Heart left ventricle (tissue), 16 donors: ENCODE measurements at regions of chr9 and their contacts with region 1.

Region 1: GRCh38 chr9:8706531-8706930 is 907.0 kb upstream of the DMAC1 start:
- DNase-seq: no peak
- ATAC-seq: no peak
- H3K4me3 ChIP-seq: no peak overlapping the region
- H3K27ac ChIP-seq: no peak overlapping the region
- H3K4me1 ChIP-seq: no peaks in the 10 kb centered on the region
- H3K27me3 ChIP-seq: no peaks in the 10 kb centered on the region
- CTCF ChIP-seq: no peak
- POLR2A ChIP-seq: no peak

Region 2: GRCh38 chr9:8053530-8053929 is 653.0 kb before region 1 on chr9:
- intact Hi-C with region 1: no loop called
- DNase-seq: no peak
- ATAC-seq: no peak
- H3K4me3 ChIP-seq: no peak overlapping the region
- H3K27ac ChIP-seq: no peak overlapping the region
- H3K4me1 ChIP-seq: no peaks in the 10 kb centered on the region
- H3K27me3 ChIP-seq: no peaks in the 10 kb centered on the region
- CTCF ChIP-seq: no peak
- POLR2A ChIP-seq: no peak

Region 3: DNA sequence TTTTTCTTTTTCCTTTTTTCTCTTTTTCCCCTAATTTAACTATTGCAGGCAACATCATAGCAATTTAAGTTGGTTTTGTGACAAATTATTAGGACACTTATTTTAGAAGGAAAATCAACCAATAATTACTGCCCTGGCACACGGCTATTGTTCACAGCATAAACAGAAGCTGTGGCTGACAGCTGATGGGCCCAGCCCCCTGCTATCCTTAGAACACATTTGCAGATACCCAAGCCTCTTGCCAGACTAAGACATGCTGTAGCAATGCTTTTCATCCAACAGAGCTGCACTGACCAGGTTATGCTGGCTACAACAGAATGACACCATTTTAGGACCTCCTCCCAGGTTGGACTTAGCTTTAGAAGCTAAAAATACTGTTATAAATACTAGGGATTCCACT is 54.3 kb before region 1 on chr9:
- intact Hi-C with region 1: loop called in 1 of 10 experiments (anchors 10 kb)
- DNase-seq: peak in 1 of 5 donors; percentile 11
- ATAC-seq: peak; percentile 79 to 92 (median 80)
- H3K4me3 ChIP-seq: no peak overlapping the region
- H3K27ac ChIP-seq: no peak overlapping the region
- H3K4me1 ChIP-seq: peaks cover 0 to 19% (median 9%) of the 10 kb centered on the region in 12 donors
- H3K27me3 ChIP-seq: no peaks in the 10 kb centered on the region
- CTCF ChIP-seq: no peak
- POLR2A ChIP-seq: no peak